PC-9 (cell line): ENCODE measurements at regions of chr1 and their contacts with region 1.

Region 1: DNA sequence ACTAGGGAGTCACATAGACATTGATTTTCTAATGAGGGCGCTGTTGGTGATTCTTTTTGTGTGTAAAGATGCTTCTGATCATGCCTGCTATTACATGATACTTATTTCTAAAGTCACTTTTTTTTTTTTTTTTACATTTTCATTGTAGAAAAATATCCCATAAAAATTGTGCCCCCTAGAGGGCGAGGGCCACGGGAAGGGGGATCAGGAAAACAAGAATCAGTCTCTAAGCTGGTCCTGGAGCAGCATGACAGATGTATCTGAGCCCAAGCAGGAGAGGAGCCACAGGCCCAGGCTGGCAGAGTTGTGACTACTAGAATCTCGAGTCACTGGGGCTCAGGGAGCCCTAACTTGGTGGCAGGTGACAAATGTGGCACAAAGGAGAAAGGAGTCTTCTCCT is 28.1 kb downstream of the ZSCAN20 start:
- DNase-seq: peak in 1 of 2 experiments; percentile 8
- H3K4me3 ChIP-seq: no peak overlapping the region
- H3K27ac ChIP-seq: no peak overlapping the region
- H3K4me1 ChIP-seq: no peaks in the 10 kb centered on the region
- H3K27me3 ChIP-seq: no peaks in the 10 kb centered on the region
- CTCF ChIP-seq: peak; percentile 56

Region 2: GRCh38 chr1:32533792-32534327 is 966.7 kb before region 1 on chr1:
- CTCF ChIA-PET with region 1: interaction called, 10 read pairs
- POLR2A ChIA-PET with region 1: no interaction called
- intact Hi-C with region 1: no loop called
- DNase-seq: no peak
- H3K4me3 ChIP-seq: no peak overlapping the region
- H3K27ac ChIP-seq: no peak overlapping the region
- H3K4me1 ChIP-seq: peaks cover 5% of the 10 kb centered on the region; the same call in 1 of the 2 replicates
- H3K27me3 ChIP-seq: no peaks in the 10 kb centered on the region
- CTCF ChIP-seq: no peak